ENCODE measurements at regions of chr7 and their contacts with region 1.

Region 1: GRCh38 chr7:116929914-116930913 is 23.1 kb upstream of the ST7 start:
- DNase-seq: peak; percentile 59 to 66 (median 63)
- H3K4me3 ChIP-seq: no peak overlapping the region
- H3K4me3 Mint-ChIP-seq: peak overlapping the region in 6 of 8 donors; percentile 17 to 69 (median 50)
- H3K27ac ChIP-seq: no peak overlapping the region
- H3K27ac Mint-ChIP-seq: no peak overlapping the region
- H3K4me1 ChIP-seq: peaks cover 7% of the 10 kb centered on the region
- H3K4me1 Mint-ChIP-seq: peaks cover 5 to 8% (median 6%) of the 10 kb centered on the region in 4 donors
- H3K27me3 ChIP-seq: no peaks in the 10 kb centered on the region
- H3K27me3 Mint-ChIP-seq: peaks cover 2 to 5% of the 10 kb centered on the region in 2 donors

Region 2: DNA sequence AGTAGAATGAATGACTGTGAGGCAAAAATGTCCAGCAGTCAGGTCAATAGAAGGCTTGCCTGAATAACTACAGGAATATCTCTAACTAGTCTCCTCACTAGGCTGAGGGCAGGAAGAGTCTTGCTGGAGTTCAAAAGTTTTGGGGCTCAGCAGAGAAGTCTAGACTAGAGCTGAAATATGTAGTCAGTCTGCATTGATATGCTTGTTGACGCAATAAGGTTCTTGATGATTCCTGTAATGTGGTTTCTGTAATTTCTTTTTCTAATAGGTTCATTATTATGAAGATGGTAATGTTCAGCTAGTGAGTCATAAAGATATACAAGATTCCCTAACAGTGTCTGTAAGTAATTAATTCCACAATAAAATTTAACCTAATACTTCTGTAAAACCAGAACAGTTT is 18.4 kb before region 1 on chr7:
- CTCF ChIA-PET with region 1: interaction called, 15 read pairs
- POLR2A ChIA-PET with region 1: no interaction called
- intact Hi-C with region 1: no loop called
- DNase-seq: no peak
- H3K4me3 ChIP-seq: no peak overlapping the region
- H3K4me3 Mint-ChIP-seq: no peak overlapping the region
- H3K27ac ChIP-seq: no peak overlapping the region
- H3K27ac Mint-ChIP-seq: no peak overlapping the region
- H3K4me1 ChIP-seq: no peaks in the 10 kb centered on the region
- H3K4me1 Mint-ChIP-seq: no peaks in the 10 kb centered on the region
- H3K27me3 ChIP-seq: no peaks in the 10 kb centered on the region
- H3K27me3 Mint-ChIP-seq: no peaks in the 10 kb centered on the region

Region 3: GRCh38 chr7:117014673-117015133 is 84.5 kb after region 1 on chr7:
- CTCF ChIA-PET with region 1: interaction called, 5 read pairs
- POLR2A ChIA-PET with region 1: no interaction called
- intact Hi-C with region 1: loop called (anchors 1 kb)
- DNase-seq: no peak
- H3K4me3 ChIP-seq: no peak overlapping the region
- H3K4me3 Mint-ChIP-seq: peak overlapping the region in 1 of 8 donors; percentile 9
- H3K27ac ChIP-seq: no peak overlapping the region
- H3K27ac Mint-ChIP-seq: no peak overlapping the region
- H3K4me1 ChIP-seq: peaks cover 29% of the 10 kb centered on the region
- H3K4me1 Mint-ChIP-seq: peaks cover 33 to 45% (median 40%) of the 10 kb centered on the region in 4 donors
- H3K27me3 ChIP-seq: no peaks in the 10 kb centered on the region
- H3K27me3 Mint-ChIP-seq: peaks cover 0 to 2% of the 10 kb centered on the region in 2 donors

Region 4: DNA sequence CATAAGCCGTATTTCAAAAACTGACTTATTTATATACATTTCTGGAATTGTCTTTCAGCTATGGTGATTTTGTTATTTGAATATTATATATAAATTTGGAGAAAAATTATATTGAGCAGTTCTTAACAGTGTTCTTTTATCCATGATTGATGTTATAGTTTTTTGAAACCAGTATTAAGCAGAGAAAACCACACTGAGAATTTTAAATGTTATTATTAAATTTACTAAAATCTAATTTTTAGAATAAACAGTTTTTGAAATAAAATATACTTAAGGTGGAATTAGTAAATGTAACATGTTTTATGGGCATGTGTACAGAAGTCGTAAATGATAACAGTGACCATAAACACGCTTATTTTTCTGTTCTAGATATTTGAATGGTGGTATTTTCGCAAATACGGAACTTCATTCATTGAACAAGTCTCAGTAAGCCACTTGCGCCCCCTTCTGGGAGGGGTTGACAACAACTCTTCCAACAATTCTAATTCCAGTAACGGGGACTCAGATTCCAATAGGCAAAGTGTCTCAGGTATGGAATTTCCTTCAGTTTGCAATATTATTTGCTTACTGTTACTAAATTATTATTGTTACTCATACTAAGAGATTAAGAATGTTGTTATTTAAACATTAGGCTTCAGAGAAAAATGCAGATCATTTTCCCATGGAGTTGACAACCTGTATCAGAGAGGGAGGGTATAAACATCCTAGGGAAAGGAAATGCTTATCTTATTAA is 189.1 kb after region 1 on chr7:
- CTCF ChIA-PET with region 1: interaction called, 204 read pairs
- POLR2A ChIA-PET with region 1: no interaction called
- intact Hi-C with region 1: loop called (anchors 1 kb)
- DNase-seq: peak; percentile 63 to 74 (median 68)
- H3K4me3 ChIP-seq: no peak overlapping the region
- H3K4me3 Mint-ChIP-seq: no peak overlapping the region
- H3K27ac ChIP-seq: no peak overlapping the region
- H3K27ac Mint-ChIP-seq: no peak overlapping the region
- H3K4me1 ChIP-seq: no peaks in the 10 kb centered on the region
- H3K4me1 Mint-ChIP-seq: no peaks in the 10 kb centered on the region
- H3K27me3 ChIP-seq: no peaks in the 10 kb centered on the region
- H3K27me3 Mint-ChIP-seq: no peaks in the 10 kb centered on the region

Region 5: GRCh38 chr7:117127585-117128168 is 197.5 kb after region 1 on chr7:
- CTCF ChIA-PET with region 1: interaction called, 204 read pairs
- POLR2A ChIA-PET with region 1: no interaction called
- intact Hi-C with region 1: loop called (anchors 1 kb)
- DNase-seq: peak in 4 of 5 donors; percentile 34 to 47 (median 44)
- H3K4me3 ChIP-seq: no peak overlapping the region
- H3K4me3 Mint-ChIP-seq: no peak overlapping the region
- H3K27ac ChIP-seq: no peak overlapping the region
- H3K27ac Mint-ChIP-seq: no peak overlapping the region
- H3K4me1 ChIP-seq: no peaks in the 10 kb centered on the region
- H3K4me1 Mint-ChIP-seq: peaks cover 0 to 4% (median 2%) of the 10 kb centered on the region in 4 donors
- H3K27me3 ChIP-seq: no peaks in the 10 kb centered on the region
- H3K27me3 Mint-ChIP-seq: no peaks in the 10 kb centered on the region

Region 6: GRCh38 chr7:118153551-118154177 is 1223.5 kb after region 1 on chr7:
- CTCF ChIA-PET with region 1: no interaction called
- POLR2A ChIA-PET with region 1: no interaction called
- intact Hi-C with region 1: loop called (anchors 1 kb)
- DNase-seq: peak; percentile 18 to 40 (median 34)
- H3K4me3 ChIP-seq: no peak overlapping the region
- H3K4me3 Mint-ChIP-seq: no peak overlapping the region
- H3K27ac ChIP-seq: no peak overlapping the region
- H3K27ac Mint-ChIP-seq: no peak overlapping the region
- H3K4me1 ChIP-seq: no peaks in the 10 kb centered on the region
- H3K4me1 Mint-ChIP-seq: no peaks in the 10 kb centered on the region
- H3K27me3 ChIP-seq: no peaks in the 10 kb centered on the region
- H3K27me3 Mint-ChIP-seq: peaks cover 20% of the 10 kb centered on the region in 2 donors